ENCODE measurements at regions of chr2 and their contacts with region 1.

Region 1: DNA sequence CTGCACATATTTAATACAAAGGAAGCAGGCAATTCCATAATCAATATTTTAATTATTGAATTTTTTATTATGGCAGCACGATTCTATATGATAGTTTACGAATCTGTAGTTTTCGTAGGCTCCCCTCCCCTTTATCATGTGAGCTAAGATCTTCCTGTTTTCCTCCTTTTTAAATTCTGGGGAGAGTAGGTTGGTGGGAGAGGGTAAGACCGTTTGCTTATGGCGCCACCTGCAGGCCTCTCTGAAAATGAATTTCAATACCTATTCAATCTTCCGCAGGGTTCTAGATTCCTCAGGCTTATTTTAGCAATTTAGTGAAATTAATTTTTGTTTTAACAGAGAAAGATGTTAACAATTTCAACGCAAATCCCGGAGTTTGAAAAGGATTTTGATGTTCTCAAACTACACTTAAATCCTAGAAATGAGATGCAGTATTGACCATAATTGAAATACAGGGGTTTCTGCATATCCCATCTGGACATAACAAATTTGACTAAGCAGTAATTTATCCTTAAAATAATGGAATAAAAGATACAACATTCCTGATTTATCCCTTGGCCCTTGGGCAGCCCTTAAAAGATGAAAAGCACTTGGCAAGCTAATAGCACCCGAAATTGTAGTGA is 12.8 kb upstream of the GBX2 start:
- DNase-seq: peak; percentile 59 to 69
- H3K4me3 ChIP-seq: no peak overlapping the region
- H3K27ac ChIP-seq: no peak overlapping the region
- H3K4me1 ChIP-seq: peaks cover 13% of the 10 kb centered on the region
- H3K27me3 ChIP-seq: no peaks in the 10 kb centered on the region
- CTCF ChIP-seq: peak; percentile 96

Region 2: GRCh38 chr2:235766278-235766677 is 414.7 kb before region 1 on chr2:
- CTCF ChIA-PET with region 1: interaction called, 26 read pairs
- POLR2A ChIA-PET with region 1: interaction called, 3 read pairs
- intact Hi-C with region 1: loop called (anchors 1 kb)
- DNase-seq: peak; percentile 81 to 82
- H3K4me3 ChIP-seq: no peak overlapping the region
- H3K27ac ChIP-seq: no peak overlapping the region
- H3K4me1 ChIP-seq: no peaks in the 10 kb centered on the region
- H3K27me3 ChIP-seq: no peaks in the 10 kb centered on the region
- CTCF ChIP-seq: peak; percentile 99

Region 3: GRCh38 chr2:235779444-235779896 is 401.5 kb before region 1 on chr2:
- CTCF ChIA-PET with region 1: interaction called, 31 read pairs
- POLR2A ChIA-PET with region 1: interaction called, 4 read pairs
- intact Hi-C with region 1: loop called (anchors 1 kb)
- DNase-seq: peak; percentile 66 to 87
- H3K4me3 ChIP-seq: no peak overlapping the region
- H3K27ac ChIP-seq: no peak overlapping the region
- H3K4me1 ChIP-seq: no peaks in the 10 kb centered on the region
- H3K27me3 ChIP-seq: no peaks in the 10 kb centered on the region
- CTCF ChIP-seq: peak; percentile 93

Region 4: DNA sequence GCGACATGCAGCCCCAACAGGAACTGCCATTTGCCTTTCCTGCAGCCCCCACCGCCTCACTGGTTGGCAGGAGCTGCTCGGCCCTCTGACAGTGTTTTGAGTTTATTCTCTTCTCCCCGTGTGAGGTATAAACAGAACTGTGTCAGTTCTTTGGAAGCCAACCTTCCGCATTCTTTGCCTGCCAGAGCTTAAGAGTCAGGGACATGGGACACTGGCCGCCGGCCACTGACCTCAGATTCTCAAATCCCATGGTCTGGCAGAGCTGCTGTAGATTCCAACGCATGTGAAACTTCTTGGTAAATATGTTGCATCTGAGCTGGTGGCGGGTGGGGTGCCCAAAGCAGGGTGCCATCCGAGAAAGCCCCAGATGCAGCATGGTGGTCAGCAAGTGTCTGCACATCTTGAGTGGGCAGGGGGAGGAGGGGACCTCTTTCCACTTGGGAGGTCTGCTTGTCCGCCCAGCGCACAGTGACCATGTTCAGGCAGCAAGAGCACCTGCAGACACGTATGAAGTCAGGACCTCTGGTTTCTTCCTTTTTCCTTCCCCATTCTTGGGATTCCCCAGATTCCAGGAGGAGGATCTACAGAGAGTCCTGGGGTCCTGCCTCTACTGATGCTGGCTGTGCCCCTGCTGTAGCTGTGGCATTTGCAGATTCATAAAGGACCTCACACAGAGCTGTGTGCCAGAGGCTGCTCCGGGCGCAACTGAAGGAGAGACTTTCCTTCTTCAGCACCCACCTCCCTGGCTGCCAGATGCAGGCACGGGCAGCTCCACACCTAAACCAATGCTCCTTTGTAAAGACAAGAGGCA is 59.5 kb after region 1 on chr2:
- CTCF ChIA-PET with region 1: interaction called, 5 read pairs
- POLR2A ChIA-PET with region 1: interaction called, 9 read pairs
- intact Hi-C with region 1: loop called (anchors 2 kb)
- DNase-seq: peak; percentile 91 to 93
- H3K4me3 ChIP-seq: no peak overlapping the region
- H3K27ac ChIP-seq: peak overlapping the region; percentile 62
- H3K4me1 ChIP-seq: peaks cover 19% of the 10 kb centered on the region
- H3K27me3 ChIP-seq: 0 out of 2 replicates have a peak, but pooled peaks cover 1% of the 10 kb centered on the region
- CTCF ChIP-seq: no peak

Region 5: DNA sequence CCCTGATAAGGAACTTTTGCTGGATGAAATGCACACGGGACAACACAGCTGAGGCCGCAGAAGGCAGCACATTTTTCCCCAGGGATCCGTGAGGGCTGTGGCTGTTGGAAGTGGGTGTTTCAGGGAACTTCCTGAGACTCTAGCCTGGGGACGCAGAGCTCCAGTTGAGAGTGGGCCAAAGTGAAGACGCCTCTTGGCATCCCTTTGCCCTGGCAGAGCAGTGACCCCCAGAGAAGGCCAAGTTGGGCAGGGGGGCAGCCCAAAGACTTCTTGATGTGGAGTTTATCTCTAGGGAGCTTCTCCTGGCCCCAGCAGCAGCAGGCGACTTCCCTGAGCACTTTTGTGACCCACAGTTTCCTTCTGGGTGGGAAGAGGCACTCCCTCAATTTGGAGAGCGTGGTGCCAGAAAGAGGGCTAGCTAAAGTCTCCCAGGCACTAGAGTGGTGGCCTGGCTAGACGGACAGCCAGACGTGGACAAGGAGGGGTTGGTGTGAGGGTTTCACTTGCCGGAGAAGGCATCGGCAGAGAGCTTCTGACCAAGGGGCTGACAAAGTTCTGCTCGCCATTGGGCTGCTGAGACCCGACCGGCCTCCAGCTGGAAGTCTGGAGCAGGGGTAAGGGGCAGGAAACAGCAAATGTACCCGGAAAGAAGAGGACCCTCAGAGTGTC is 497.5 kb after region 1 on chr2:
- CTCF ChIA-PET with region 1: interaction called, 12 read pairs
- POLR2A ChIA-PET with region 1: no interaction called
- intact Hi-C with region 1: no loop called
- DNase-seq: no peak
- H3K4me3 ChIP-seq: no peak overlapping the region
- H3K27ac ChIP-seq: no peak overlapping the region
- H3K4me1 ChIP-seq: no peaks in the 10 kb centered on the region
- H3K27me3 ChIP-seq: peaks cover 8% of the 10 kb centered on the region; the same call in 1 of the 2 replicates
- CTCF ChIP-seq: no peak

Region 6: DNA sequence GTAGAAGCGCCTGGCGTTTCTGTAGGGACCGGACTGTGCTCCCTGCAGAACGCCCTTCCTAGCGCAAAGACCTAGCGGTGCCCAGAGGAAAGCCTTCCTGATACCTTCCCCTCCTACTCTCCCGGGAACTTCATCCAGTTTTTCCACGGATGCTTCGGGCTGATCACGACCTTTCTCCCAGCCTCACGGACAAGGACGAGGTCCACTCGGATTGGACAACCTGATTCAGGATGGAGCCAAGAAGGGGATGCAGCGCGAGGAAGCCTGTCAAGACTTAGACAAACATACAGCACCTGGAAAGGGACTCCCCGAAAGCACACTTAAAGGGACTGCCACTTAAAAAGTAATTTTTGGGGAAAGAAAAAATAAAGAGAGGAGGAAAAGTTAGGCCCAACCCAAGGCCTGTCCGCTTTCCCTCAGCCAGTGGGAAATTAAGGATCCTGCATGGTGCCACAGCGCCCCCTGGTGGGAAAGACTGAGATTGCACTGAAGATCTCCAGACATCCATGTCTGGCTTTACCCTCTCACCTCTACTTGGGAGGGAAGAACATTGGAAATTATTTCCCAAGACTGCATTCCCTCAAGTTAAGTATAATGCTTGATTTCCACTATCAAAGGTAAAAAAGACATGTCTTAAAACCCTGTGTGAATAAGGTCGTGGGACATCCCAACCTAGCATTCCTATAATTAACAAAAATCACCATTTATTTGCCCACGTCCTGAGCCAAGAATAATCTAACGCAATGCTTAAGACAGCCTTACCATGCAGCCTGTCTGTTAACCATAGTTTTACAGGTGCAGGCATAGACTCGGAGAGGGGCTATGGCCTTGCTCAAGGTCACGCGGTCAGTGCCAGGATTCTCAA is 891.4 kb after region 1 on chr2:
- CTCF ChIA-PET with region 1: no interaction called
- POLR2A ChIA-PET with region 1: no interaction called
- intact Hi-C with region 1: loop called (anchors 5 kb)
- DNase-seq: peak; percentile 40 to 76
- H3K4me3 ChIP-seq: no peak overlapping the region
- H3K27ac ChIP-seq: no peak overlapping the region
- H3K4me1 ChIP-seq: peaks cover 22% of the 10 kb centered on the region
- H3K27me3 ChIP-seq: 0 out of 2 replicates have a peak, but pooled peaks cover 8% of the 10 kb centered on the region
- CTCF ChIP-seq: peak; percentile 100

Region 7: DNA sequence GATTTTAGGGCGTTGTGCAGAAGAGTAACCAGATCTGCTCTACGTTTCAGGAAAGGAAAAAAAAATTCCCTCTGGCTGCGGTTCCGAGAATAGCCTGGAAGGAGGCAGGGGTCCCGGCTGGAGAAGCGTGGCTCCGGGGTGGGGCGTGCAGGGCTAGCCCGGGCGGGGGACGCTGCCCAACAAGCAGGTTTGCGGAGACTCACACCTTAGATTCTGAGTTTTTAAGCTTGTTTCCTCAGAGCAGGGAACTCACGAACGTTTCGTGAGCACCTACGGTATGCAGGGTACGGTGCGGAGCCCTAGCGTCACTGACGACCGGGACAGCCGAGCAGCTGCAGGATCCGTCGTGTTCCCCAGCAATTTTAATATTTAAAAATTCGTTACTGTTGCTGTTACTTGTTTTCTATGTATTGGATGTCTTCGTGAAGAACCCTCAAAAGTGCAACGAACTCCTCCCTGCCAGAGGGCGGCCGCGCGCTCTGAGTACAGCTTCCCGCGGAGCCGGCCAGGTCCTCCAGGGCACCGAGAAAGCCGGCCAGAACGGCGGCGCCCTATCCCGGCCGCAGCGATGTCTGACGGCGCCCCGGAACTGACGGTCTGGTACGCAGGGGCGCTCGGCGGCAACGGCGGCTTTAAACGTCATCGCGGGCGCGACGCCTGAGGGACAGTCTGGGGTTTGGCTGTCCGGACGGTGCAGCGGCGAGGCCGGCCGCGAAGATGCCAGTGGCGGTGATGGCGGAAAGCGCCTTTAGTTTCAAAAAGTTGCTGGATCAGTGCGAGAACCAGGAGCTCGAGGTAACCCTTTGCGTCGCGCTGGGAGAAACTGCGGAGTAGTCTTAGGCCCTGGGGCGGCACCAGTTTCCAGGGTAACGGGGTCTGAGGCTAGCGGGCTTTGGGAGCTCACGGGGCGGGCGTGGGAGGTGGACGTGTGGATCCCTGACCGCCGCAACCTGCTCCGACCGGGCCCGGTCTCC is 904.6 kb after region 1 on chr2 and contains the start of gene COPS8:
- CTCF ChIA-PET with region 1: interaction called, 11 read pairs
- POLR2A ChIA-PET with region 1: no interaction called
- intact Hi-C with region 1: no loop called
- DNase-seq: peak; percentile 87 to 98
- H3K4me3 ChIP-seq: peak within 1 kb of the TSS; percentile 85
- H3K27ac ChIP-seq: peak within 1 kb of the TSS; percentile 53
- H3K4me1 ChIP-seq: peaks cover 19% of the 10 kb centered on the region
- H3K27me3 ChIP-seq: no peaks in the 10 kb centered on the region
- CTCF ChIP-seq: peak; percentile 45; the same call in 1 of the 2 replicates
- total RNA-seq, gene COPS8: 57.6 and 64.7 TPM in 2 replicates

Measured in PC-9 (cell line).